WTC11 (cell line): ENCODE measurements at regions of chr2 and their contacts with region 1.

Region 1: GRCh38 chr2:37389989-37390765 is 45.7 kb downstream of the QPCT start:
- DNase-seq: no peak
- ATAC-seq: peak; percentile 93
- H3K4me3 Mint-ChIP-seq: no peak overlapping the region
- H3K27ac Mint-ChIP-seq: peak overlapping the region; percentile 85
- H3K4me1 Mint-ChIP-seq: no peaks in the 10 kb centered on the region; the same call in 1 of the 2 replicates
- H3K27me3 Mint-ChIP-seq: no peaks in the 10 kb centered on the region
- CTCF ChIP-seq: no peak

Region 2: DNA sequence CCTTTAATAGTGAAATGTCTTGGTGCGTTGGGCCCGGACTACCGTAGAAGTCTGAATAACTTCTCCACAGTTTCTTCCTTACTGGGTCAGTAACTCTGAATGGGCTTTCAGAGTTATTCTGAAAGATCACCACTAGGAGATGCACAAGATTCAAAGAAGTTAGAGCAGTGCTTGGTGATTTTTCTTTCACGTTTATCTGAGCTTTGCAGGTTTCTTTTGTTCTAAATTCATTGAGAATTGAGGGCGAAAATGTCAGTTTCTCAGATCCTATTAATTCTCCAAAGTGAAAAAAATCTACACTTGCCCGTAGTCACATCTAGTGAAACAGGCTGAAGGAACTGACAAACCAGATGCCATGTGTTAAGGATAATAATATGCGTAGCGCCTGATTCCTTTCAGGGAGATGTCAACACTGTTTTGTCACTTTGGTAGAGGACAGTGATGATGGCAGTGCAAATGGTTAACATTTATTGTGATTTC is 24.3 kb after region 1 on chr2:
- CTCF ChIA-PET with region 1: interaction called, 34 read pairs
- POLR2A ChIA-PET with region 1: no interaction called
- DNase-seq: no peak
- ATAC-seq: peak; percentile 92
- H3K4me3 Mint-ChIP-seq: no peak overlapping the region
- H3K27ac Mint-ChIP-seq: no peak overlapping the region
- H3K4me1 Mint-ChIP-seq: peaks cover 13% of the 10 kb centered on the region
- H3K27me3 Mint-ChIP-seq: no peaks in the 10 kb centered on the region; the same call in 1 of the 2 replicates
- CTCF ChIP-seq: peak; percentile 45

Region 3: GRCh38 chr2:37832590-37833197 is 442.5 kb after region 1 on chr2:
- CTCF ChIA-PET with region 1: interaction called, 44 read pairs
- POLR2A ChIA-PET with region 1: no interaction called
- DNase-seq: peak; percentile 88
- ATAC-seq: peak; percentile 98
- H3K4me3 Mint-ChIP-seq: no peak overlapping the region
- H3K27ac Mint-ChIP-seq: no peak overlapping the region
- H3K4me1 Mint-ChIP-seq: peaks cover 9% of the 10 kb centered on the region
- H3K27me3 Mint-ChIP-seq: no peaks in the 10 kb centered on the region
- CTCF ChIP-seq: peak; percentile 55

Region 4: DNA sequence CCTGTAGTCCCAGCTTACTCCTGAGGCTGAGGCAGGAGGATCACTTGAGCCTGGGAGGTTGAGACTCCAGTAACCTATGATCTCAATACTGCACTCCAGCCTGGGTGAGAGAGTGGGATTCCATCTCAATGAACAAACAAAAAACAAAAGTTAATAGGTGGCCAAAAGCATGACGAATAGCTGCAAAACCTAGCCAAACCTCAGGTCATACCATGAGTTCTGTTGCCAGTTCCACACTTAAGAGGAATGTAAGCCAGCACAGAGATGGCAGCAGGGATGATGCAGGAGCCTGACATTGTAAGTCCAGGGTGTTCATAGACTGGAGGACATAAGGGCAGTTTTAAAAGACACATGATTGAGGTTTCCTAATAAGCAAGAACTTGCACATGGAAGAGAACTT is 479.6 kb after region 1 on chr2:
- CTCF ChIA-PET with region 1: interaction called, 11 read pairs
- POLR2A ChIA-PET with region 1: no interaction called
- DNase-seq: no peak
- ATAC-seq: no peak
- H3K4me3 Mint-ChIP-seq: no peak overlapping the region
- H3K27ac Mint-ChIP-seq: no peak overlapping the region
- H3K4me1 Mint-ChIP-seq: peaks cover 36% of the 10 kb centered on the region
- H3K27me3 Mint-ChIP-seq: peaks cover 5% of the 10 kb centered on the region; the same call in 1 of the 2 replicates
- CTCF ChIP-seq: no peak